ENCODE measurements at regions of chr15 and their contacts with region 1.

Region 1: GRCh38 chr15:89177633-89178306 is 43.6 kb downstream of the RLBP1 start:
- DNase-seq: peak; percentile 78
- ATAC-seq: peak; percentile 55
- H3K4me3 Mint-ChIP-seq: no peak overlapping the region
- H3K27ac Mint-ChIP-seq: no peak overlapping the region
- H3K4me1 Mint-ChIP-seq: peaks cover 8% of the 10 kb centered on the region
- H3K27me3 Mint-ChIP-seq: no peaks in the 10 kb centered on the region

Region 2: DNA sequence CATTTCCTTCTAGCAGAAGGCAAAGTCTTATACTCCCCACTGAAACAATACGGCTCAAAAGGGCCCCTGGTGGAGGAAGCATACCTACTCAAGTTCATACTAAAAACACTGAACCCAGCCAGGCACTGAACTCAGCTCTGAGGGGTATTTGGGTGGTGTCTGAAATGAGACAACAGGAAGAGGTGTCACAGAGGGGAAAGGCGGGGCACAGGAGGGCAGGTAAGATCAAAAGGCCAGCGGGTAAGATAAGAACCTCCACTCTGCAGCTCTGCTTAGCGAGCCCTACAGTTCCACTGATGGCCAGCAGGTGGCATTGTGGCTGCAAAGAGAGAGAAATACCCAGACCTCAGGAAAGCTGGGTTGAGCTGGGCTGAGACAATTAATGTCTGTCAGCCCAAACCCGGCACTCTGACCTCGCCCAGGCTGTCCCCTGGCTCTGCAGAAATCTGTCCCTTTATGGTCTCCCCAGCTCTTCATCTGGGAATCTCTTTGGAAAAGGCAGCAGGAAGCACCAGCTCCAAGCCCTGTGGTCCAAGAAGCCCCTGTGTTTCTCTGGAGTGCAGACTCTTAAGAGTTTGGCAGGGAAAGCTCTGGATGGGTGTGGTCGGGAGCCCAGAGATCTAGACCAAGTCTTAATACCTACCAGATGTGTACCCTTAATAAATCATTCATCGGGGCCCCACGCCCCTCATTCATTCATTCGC is 273.0 kb before region 1 on chr15:
- CTCF ChIA-PET with region 1: interaction called, 23 read pairs
- DNase-seq: peak; percentile 94
- ATAC-seq: peak; percentile 98
- H3K4me3 Mint-ChIP-seq: no peak overlapping the region
- H3K27ac Mint-ChIP-seq: peak overlapping the region; percentile 76
- H3K4me1 Mint-ChIP-seq: peaks cover 16% of the 10 kb centered on the region
- H3K27me3 Mint-ChIP-seq: no peaks in the 10 kb centered on the region

Region 3: GRCh38 chr15:88932271-88932874 is 245.4 kb before region 1 on chr15:
- CTCF ChIA-PET with region 1: no interaction called
- DNase-seq: no peak
- ATAC-seq: no peak
- H3K4me3 Mint-ChIP-seq: no peak overlapping the region
- H3K27ac Mint-ChIP-seq: no peak overlapping the region
- H3K4me1 Mint-ChIP-seq: no peaks in the 10 kb centered on the region
- H3K27me3 Mint-ChIP-seq: peaks cover 36% of the 10 kb centered on the region

Region 4: DNA sequence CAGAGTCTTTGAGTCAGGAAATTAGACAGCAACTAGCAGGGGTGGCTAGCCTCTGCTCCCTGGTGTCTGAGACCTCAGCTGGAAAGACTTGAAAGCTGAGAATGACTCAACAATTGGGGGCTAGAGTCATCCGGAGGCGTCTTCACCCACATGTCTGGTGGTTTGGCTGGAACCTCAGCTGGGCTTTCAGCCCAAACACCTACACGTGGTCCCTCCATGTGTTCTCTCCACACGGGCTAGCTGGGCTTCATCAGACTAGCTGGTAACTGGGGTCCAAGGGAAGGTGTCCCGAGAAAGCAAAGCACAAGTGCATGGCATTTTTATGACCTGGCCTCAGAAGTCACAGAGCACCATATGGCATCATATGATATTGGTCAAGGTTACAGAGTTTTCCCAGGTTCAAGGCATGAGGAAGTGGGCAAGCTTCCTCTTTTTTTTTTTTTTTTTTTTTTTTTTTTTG is 109.4 kb before region 1 on chr15:
- CTCF ChIA-PET with region 1: interaction called, 11 read pairs
- DNase-seq: peak; percentile 88
- ATAC-seq: peak; percentile 92
- H3K4me3 Mint-ChIP-seq: peak overlapping the region; percentile 2
- H3K27ac Mint-ChIP-seq: peak overlapping the region; percentile 66
- H3K4me1 Mint-ChIP-seq: peaks cover 22% of the 10 kb centered on the region
- H3K27me3 Mint-ChIP-seq: peaks cover 3% of the 10 kb centered on the region

Region 5: DNA sequence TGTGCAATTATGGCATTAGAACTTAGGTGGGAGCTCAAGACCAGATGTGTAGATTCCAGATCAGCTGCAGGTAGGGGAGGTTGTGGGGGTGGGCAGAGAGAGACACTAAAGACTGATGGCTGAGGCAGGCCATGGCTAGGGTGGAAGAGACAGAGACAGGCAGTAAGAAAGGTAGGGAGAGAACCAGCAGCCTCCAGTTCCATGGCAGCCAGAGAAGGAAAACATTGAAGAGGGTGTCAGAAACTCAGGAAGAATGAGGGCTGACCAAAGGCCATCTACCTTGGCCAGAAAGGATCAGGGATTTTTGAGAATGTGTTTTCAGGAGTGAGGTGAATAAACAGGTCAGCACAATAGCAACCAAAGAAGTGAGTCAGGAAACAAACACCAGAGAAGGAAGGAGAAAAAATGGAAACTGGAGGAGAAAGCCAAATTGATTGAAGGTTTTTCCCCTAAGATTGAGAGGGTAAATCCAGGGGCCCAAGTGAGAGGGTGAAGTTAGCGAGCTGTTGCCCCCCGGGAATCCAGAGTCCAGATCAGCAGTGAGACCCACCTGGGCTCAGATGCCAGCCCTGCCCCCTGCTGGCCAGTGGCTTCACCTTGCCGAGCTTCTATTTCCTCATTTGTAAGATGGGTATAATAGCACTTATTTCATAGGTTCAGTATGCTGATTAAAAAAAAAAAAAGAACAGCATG is 48.5 kb before region 1 on chr15:
- CTCF ChIA-PET with region 1: interaction called, 23 read pairs
- DNase-seq: peak; percentile 61
- ATAC-seq: no peak
- H3K4me3 Mint-ChIP-seq: no peak overlapping the region
- H3K27ac Mint-ChIP-seq: no peak overlapping the region
- H3K4me1 Mint-ChIP-seq: peaks cover 40% of the 10 kb centered on the region
- H3K27me3 Mint-ChIP-seq: no peaks in the 10 kb centered on the region

Region 6: DNA sequence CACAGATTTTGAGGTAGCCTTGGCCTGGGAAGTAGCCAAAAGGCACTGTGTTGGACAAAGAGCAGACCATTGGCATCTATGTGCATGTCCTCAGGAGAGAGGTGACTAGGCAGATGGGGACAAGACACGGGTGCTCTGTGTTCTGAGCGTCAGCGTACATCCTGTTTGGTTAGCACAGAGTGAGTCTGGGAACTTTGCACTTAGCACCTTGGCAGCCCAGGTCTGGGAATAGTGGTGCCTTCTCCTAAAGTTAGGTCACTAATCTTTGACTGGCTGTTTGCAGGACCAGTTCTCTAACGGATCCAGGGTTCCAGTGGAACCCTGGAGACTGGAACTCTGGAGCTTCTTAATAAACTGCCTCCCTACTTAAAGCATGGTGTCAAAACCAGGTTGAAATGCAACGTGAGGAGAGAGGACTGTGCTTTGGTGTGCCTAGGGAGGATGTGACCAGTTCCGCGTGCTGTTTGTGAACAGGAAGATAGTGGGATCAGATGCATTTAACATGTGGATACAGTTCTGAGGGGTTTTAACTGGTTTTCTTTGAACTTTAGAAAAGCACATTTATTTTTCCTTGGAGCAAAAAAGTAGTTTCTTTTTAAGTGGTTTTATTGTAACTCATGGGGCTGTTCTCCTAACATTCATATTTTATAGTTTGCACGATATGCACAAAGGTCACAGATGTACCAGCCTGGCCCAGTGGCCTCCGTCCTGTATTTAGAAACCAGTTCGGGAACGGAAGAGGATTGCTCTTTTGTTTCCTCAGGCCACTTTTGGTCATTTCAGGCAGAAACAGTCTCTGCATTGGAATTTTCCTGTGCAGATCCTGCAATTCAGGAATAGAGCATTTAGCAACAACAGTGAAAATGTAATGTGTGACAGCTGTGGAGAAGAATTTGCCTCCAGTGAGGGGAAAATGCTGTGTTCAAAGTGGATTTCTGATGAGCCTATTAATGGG is 40.7 kb before region 1 on chr15:
- CTCF ChIA-PET with region 1: interaction called, 23 read pairs
- DNase-seq: no peak
- ATAC-seq: peak; percentile 60
- H3K4me3 Mint-ChIP-seq: no peak overlapping the region
- H3K27ac Mint-ChIP-seq: peak overlapping the region; percentile 65
- H3K4me1 Mint-ChIP-seq: peaks cover 37% of the 10 kb centered on the region
- H3K27me3 Mint-ChIP-seq: no peaks in the 10 kb centered on the region

Region 7: GRCh38 chr15:89143503-89144162 is 34.1 kb before region 1 on chr15:
- CTCF ChIA-PET with region 1: interaction called, 11 read pairs
- DNase-seq: no peak
- ATAC-seq: peak; percentile 88
- H3K4me3 Mint-ChIP-seq: no peak overlapping the region
- H3K27ac Mint-ChIP-seq: peak overlapping the region; percentile 19
- H3K4me1 Mint-ChIP-seq: peaks cover 33% of the 10 kb centered on the region
- H3K27me3 Mint-ChIP-seq: no peaks in the 10 kb centered on the region

Region 8: GRCh38 chr15:89187976-89188514 is 10.3 kb after region 1 on chr15:
- CTCF ChIA-PET with region 1: interaction called, 19 read pairs
- DNase-seq: no peak
- ATAC-seq: no peak
- H3K4me3 Mint-ChIP-seq: no peak overlapping the region
- H3K27ac Mint-ChIP-seq: no peak overlapping the region
- H3K4me1 Mint-ChIP-seq: peaks cover 3% of the 10 kb centered on the region
- H3K27me3 Mint-ChIP-seq: no peaks in the 10 kb centered on the region

Region 9: DNA sequence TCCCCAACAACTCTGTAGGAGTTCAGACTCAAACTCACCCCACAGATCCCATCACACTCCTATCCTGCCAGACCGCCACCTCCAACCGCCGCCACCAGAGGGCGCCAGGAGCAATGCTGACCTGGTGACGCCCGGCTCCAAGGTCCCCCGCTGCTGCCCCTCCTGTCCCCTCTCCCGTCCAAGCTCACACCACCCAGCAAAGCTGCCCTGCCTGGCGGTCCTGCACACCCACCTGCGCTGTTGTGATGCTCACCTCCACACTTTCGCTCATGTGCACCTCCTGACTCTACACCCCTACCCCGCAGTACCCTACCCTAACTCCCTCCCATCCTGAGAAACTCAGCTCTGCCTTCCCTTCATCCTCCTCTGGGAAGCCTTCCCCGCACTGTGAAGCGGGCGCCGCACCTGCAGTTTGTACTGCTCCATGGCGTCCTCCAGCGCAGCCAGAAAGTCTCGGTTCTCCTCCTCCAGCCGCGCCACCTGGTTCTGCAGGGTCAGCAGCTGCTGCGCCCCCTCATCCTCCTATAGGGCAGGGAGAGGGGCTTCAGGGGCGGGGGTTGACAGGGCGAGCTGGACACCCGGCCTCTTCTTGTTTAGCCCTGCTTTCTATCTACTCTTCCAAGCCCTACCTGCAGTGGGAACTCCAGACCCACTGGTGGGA is 469.6 kb after region 1 on chr15:
- CTCF ChIA-PET with region 1: no interaction called
- DNase-seq: peak; percentile 76
- ATAC-seq: peak; percentile 74
- H3K4me3 Mint-ChIP-seq: no peak overlapping the region
- H3K27ac Mint-ChIP-seq: no peak overlapping the region
- H3K4me1 Mint-ChIP-seq: no peaks in the 10 kb centered on the region
- H3K27me3 Mint-ChIP-seq: peaks cover 2% of the 10 kb centered on the region

Measured in activated CD8-positive, alpha-beta memory T cell treated with anti-CD3 and anti-CD28 coated beads, Interleukin-2, amount 10 ng/mL, durations not matched to agents 7 days and 5 days (primary cell).